ENCODE measurements at regions of chr18 and their contacts with region 1.

Region 1: GRCh38 chr18:55234366-55235093 is 275.3 kb upstream of the CCDC68 start:
- DNase-seq: peak; percentile 88
- ATAC-seq: peak; percentile 89
- H3K4me3 ChIP-seq: peak overlapping the region; percentile 62
- H3K27ac ChIP-seq: no peak overlapping the region
- H3K4me1 ChIP-seq: peaks cover 23% of the 10 kb centered on the region
- H3K27me3 ChIP-seq: no peaks in the 10 kb centered on the region
- CTCF ChIP-seq: peak; percentile 93

Region 2: DNA sequence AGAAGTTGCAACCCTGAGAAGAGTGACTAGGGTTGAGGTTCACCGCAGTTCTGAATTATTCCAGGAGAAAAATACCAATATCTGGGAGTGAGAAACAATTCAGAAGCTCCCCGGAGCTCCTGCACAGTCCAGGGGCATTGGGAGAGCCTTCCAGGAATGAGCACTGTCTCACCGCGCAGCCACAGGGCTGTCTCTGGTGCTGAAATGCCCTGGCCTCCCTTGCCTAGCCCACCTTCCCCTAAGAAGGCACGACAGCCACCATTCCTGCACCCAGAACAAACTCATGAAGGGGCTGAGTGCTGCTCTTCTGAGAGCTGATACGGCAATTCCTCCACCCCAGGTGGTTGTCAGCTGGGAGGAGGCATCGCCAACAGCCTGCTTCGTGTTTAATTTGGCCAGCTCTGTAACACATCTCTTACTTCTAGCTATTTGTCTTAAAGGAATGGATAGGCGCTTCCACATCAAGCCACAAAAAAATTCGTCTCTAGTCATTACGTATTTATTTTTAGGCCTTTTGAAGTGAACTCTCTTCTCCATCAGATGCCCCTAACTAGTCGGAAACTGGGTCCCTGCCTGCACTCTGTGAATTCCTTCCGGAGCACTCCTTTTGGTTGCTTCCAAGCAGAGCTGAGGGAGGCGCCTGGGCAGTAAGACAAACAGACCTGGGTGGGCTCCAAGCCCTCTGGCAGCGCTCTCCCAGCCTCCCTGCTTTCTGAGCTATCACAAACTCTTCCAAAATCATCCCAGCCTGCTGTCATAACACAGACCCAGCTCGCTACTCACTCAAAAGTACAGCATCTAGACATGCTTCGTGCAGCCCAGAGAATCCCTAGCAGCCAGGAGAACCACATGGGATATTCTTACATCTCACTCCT is 154.8 kb before region 1 on chr18:
- CTCF ChIA-PET with region 1: no interaction called
- POLR2A ChIA-PET with region 1: no interaction called
- intact Hi-C with region 1: no loop called
- DNase-seq: no peak
- ATAC-seq: no peak
- H3K4me3 ChIP-seq: no peak overlapping the region
- H3K27ac ChIP-seq: no peak overlapping the region
- H3K4me1 ChIP-seq: no peaks in the 10 kb centered on the region; the same call in 1 of the 2 replicates
- H3K27me3 ChIP-seq: no peaks in the 10 kb centered on the region
- CTCF ChIP-seq: no peak

Region 3: GRCh38 chr18:55275039-55275901 is 40.7 kb after region 1 on chr18:
- CTCF ChIA-PET with region 1: interaction called, 8 read pairs
- POLR2A ChIA-PET with region 1: no interaction called
- intact Hi-C with region 1: loop called (anchors 1 kb)
- DNase-seq: peak; percentile 76
- ATAC-seq: peak; percentile 95
- H3K4me3 ChIP-seq: no peak overlapping the region
- H3K27ac ChIP-seq: no peak overlapping the region
- H3K4me1 ChIP-seq: peaks cover 8% of the 10 kb centered on the region
- H3K27me3 ChIP-seq: no peaks in the 10 kb centered on the region
- CTCF ChIP-seq: peak; percentile 61

Region 4: GRCh38 chr18:55343396-55344073 is 109.0 kb after region 1 on chr18:
- CTCF ChIA-PET with region 1: interaction called, 5 read pairs
- POLR2A ChIA-PET with region 1: no interaction called
- intact Hi-C with region 1: loop called (anchors 1 kb)
- DNase-seq: peak; percentile 46
- ATAC-seq: peak; percentile 37; the same call in 1 of the 2 replicates
- H3K4me3 ChIP-seq: no peak overlapping the region
- H3K27ac ChIP-seq: no peak overlapping the region
- H3K4me1 ChIP-seq: no peaks in the 10 kb centered on the region
- H3K27me3 ChIP-seq: no peaks in the 10 kb centered on the region
- CTCF ChIP-seq: peak; percentile 69

Region 5: DNA sequence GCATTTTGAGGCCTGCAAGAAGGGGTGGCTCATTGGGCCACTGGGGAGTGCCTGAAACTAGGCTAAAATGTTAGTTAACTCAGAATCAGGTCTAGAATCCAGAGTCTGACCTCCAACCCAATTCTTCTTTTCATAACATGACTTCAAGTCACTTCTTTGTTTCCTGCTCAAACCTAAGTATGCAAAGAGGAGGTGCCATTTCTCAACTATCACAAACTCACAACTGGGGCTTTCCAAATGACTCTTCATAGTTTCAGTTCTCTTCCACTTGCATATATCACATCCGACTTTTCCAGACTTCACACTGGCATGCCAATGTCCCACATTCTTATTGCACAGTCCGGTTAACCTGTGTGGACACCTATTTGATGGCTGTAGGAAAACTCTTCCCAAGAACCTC is 141.9 kb after region 1 on chr18:
- CTCF ChIA-PET with region 1: no interaction called
- POLR2A ChIA-PET with region 1: no interaction called
- intact Hi-C with region 1: no loop called
- DNase-seq: no peak
- ATAC-seq: no peak
- H3K4me3 ChIP-seq: no peak overlapping the region
- H3K27ac ChIP-seq: no peak overlapping the region
- H3K4me1 ChIP-seq: no peaks in the 10 kb centered on the region
- H3K27me3 ChIP-seq: no peaks in the 10 kb centered on the region
- CTCF ChIP-seq: no peak

Region 6: DNA sequence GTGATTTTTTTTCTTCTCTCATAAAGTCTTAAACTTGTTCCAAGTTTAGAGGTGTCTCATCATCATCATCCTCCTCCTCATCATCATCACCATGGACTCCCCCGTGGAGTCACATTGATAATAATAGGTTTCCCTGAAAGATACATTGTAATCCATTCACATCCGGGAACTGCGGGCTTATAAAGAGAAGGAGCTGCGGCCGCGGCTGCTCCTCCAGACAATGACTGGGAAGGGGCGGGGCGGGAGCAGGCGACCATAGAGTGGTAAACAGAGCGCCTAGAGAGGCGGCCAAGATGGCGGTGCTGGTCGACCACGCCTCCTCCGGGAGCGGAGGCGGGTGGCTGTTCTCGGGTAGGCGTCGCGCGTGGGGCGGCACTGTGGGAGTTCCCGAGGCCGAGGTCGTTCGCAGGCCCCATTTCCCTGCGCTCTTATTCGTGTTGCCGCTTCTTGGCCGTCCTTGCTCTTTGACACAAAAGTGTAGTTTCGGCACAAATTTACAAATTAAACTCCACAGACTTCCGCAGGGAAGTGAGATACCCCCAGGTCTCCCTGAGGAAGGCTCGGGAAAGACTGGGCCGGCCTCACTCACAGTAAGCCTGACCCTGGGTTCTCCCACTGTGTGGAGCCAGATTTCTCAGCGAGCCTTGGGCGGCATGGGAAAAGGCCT is 355.2 kb after region 1 on chr18:
- CTCF ChIA-PET with region 1: no interaction called
- POLR2A ChIA-PET with region 1: no interaction called
- intact Hi-C with region 1: loop called (anchors 5 kb)
- DNase-seq: peak; percentile 93
- ATAC-seq: peak; percentile 88
- H3K4me3 ChIP-seq: peak overlapping the region; percentile 91
- H3K27ac ChIP-seq: peak overlapping the region; percentile 42
- H3K4me1 ChIP-seq: peaks cover 5% of the 10 kb centered on the region; the same call in 1 of the 2 replicates
- H3K27me3 ChIP-seq: no peaks in the 10 kb centered on the region
- CTCF ChIP-seq: no peak

Region 7: GRCh38 chr18:55856229-55856628 is 621.7 kb after region 1 on chr18:
- CTCF ChIA-PET with region 1: no interaction called
- POLR2A ChIA-PET with region 1: no interaction called
- intact Hi-C with region 1: loop called (anchors 5 kb)
- DNase-seq: peak; percentile 99
- ATAC-seq: peak; percentile 95
- H3K4me3 ChIP-seq: peak overlapping the region; percentile 23; the same call in 1 of the 2 replicates
- H3K27ac ChIP-seq: peak overlapping the region; percentile 72
- H3K4me1 ChIP-seq: peaks cover 37% of the 10 kb centered on the region
- H3K27me3 ChIP-seq: no peaks in the 10 kb centered on the region
- CTCF ChIP-seq: no peak

Measured in PC-3 (cell line).